Posterior cingulate gyrus (tissue), 11 donors: ENCODE measurements at regions of chr3 and their contacts with region 1.

Region 1: GRCh38 chr3:156151824-156152428 is 31.5 kb downstream of the KCNAB1 start:
- DNase-seq: peak; percentile 41 to 96 (median 72)

Region 2: DNA sequence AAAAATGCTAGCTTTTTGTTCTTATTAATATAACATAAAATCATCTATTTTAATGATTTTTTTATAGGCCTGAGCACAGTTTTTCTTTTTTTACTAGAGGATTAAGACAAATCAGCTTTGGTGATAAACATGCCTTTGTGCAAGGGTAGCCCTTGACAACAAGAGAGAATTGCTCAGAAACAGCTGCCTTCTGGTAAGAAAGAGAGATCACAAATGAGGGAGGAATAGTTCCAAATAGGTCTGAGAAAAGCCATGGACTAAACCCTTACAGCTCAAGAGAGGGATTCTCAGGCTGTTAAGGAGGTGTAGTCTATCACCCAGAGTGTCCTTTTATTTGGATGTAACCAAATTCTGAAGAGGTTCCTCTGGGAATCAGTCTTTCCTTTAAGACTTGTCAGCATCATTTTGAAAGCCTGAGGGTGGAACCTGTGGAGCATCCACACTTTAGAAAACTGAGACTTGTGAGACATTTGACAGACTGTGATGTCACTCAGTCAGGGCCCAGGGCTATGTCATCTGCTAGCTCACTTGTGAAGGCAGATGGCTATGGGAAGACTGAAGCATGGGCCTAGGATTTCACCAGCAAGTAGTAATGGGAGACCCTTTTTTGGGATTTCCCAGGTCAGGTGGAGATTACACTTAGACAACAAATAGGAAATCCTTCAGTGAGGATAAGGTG is 134.4 kb before region 1 on chr3:
- intact Hi-C with region 1: loop called (anchors 5 kb)
- DNase-seq: no peak

Region 3: GRCh38 chr3:156071031-156071430 is 80.9 kb before region 1 on chr3:
- intact Hi-C with region 1: no loop called
- DNase-seq: no peak

Region 4: GRCh38 chr3:156449712-156450574 is 298.0 kb after region 1 on chr3:
- intact Hi-C with region 1: loop called (anchors 2 kb)
- DNase-seq: no peak

Region 5: GRCh38 chr3:156509189-156510174 is 357.6 kb after region 1 on chr3:
- intact Hi-C with region 1: loop called (anchors 2 kb)
- DNase-seq: no peak

Region 6: GRCh38 chr3:156674046-156674910 is 522.4 kb after region 1 on chr3 and contains the start of gene TIPARP:
- intact Hi-C with region 1: loop called (anchors 5 kb)
- DNase-seq: peak; percentile 97 to 100 (median 98)

Region 7: GRCh38 chr3:157081681-157082210 is 929.8 kb after region 1 on chr3:
- intact Hi-C with region 1: loop called (anchors 10 kb)
- DNase-seq: peak; percentile 82 to 98 (median 94)

Region 8: GRCh38 chr3:157136647-157137387 is 984.9 kb after region 1 on chr3:
- intact Hi-C with region 1: loop called (anchors 5 kb)
- DNase-seq: peak in 2 of 10 donors; percentile 22 to 82